Posterior vena cava (tissue), 2 donors: ENCODE measurements at regions of chr5 and their contacts with region 1.

Region 1: GRCh38 chr5:13478831-13479465 is 465.5 kb downstream of the DNAH5 start:
- DNase-seq: no peak

Region 2: GRCh38 chr5:15132434-15133405 is 1653.8 kb after region 1 on chr5:
- intact Hi-C with region 1: loop called in 1 of 2 experiments (anchors 10 kb)
- DNase-seq: no peak